Left cardiac atrium (tissue), 4 donors: ENCODE measurements at regions of chr2 and their contacts with region 1.

Region 1: DNA sequence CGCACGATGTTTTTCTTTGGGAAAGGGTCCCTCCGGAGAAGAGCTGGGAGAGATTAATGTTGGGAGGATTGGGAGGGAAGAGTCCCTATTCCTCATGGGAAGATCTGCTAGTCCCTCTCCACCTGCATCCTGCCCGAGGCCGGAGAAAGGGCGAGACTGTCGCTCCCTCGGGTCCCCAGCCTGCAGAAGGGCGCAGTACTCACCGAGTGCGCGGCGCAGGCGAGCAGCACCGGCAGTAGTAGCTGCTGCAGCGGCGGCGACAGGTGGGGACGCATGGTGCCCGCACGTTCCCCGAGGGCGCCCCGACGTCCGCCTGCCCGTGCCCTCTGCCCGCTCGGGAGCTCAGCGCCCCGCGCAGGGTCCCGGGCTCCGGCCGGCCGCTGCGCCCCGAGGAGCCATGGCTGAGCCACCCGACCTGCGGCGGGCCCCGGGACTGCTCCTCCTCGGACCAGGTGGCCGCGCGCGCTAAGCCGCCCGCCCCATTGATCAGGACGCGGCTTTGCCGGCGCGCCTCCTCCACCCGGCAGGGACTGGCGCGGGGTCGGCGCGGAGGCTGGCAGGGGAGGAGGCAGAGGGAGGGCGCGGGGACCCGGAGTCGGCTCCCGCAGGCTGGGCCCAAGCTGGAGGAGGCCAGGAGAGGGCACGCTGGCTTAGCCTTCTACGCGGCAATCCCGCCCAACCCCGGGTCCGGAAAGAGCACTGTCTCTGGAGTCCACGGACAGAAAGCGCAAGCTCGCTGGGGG is at the start of gene SCTR:
- DNase-seq: no peak
- ATAC-seq: peak; percentile 44 to 48
- total RNA-seq, gene SCTR: 0.32 TPM in 1 of 2 donors, not detected in the other

Region 2: DNA sequence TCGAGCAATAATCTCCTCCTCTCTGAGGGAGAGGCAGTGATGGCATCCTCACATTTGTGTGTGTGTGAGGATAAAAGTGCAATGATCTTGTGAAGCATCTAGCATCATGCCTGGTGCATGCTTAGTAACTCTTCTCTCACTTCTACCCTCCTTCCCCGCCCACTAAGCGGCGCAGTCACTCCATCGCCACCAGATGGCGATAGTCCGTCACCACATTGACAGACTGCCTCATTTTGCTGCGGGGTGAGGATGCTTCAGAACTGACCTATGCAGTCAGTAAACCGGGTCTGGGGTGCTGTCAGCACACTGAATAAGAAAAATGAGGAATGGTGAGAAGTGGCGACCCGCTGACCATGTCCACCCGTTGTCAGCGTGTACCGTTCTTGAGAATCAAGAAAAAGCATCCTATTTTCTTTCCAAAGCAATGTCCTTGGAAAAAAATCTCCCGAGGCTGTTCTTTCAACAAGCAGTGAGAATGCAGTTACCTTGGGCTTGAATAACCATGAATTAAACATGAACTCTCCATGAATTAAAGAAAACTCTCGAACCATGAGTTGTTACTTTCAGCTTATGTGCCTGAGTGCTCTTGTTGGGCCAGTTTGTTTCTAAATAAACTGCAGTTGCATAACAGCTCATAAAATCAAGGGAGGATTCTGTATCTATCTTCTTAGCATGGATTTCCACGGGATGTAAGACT is 117.6 kb after region 1 on chr2:
- intact Hi-C with region 1: loop called in 1 of 2 experiments (anchors 10 kb)
- DNase-seq: peak; percentile 71
- ATAC-seq: peak; percentile 83 to 94